HepG2 (cell line): ENCODE measurements at regions of chr2 and their contacts with region 1.

Region 1: GRCh38 chr2:132438691-132439090 is 22.1 kb downstream of the GPR39 start:
- DNase-seq: no peak
- ATAC-seq: no peak
- H3K4me3 ChIP-seq: peak overlapping the region in 1 of 3 experiments; percentile 4; a peak in 1 of 6 replicates
- H3K27ac ChIP-seq: no peak overlapping the region
- H3K4me1 ChIP-seq: peaks cover 44% of the 10 kb centered on the region
- H3K27me3 ChIP-seq: no peaks in the 10 kb centered on the region
- CTCF ChIP-seq: no peak
- EP300 ChIP-seq: no peak
- POLR2A ChIP-seq: no peak
- RAD21 ChIP-seq: no peak

Region 2: GRCh38 chr2:132372276-132372675 is 66.4 kb before region 1 on chr2:
- CTCF ChIA-PET with region 1: no interaction called
- POLR2A ChIA-PET with region 1: no interaction called
- in situ Hi-C with region 1: no loop called
- intact Hi-C with region 1: no loop called
- DNase-seq: no peak
- ATAC-seq: no peak
- H3K4me3 ChIP-seq: no peak overlapping the region
- H3K27ac ChIP-seq: no peak overlapping the region
- H3K4me1 ChIP-seq: no peaks in the 10 kb centered on the region
- H3K27me3 ChIP-seq: no peaks in the 10 kb centered on the region
- CTCF ChIP-seq: no peak
- EP300 ChIP-seq: no peak
- POLR2A ChIP-seq: no peak
- RAD21 ChIP-seq: no peak

Region 3: DNA sequence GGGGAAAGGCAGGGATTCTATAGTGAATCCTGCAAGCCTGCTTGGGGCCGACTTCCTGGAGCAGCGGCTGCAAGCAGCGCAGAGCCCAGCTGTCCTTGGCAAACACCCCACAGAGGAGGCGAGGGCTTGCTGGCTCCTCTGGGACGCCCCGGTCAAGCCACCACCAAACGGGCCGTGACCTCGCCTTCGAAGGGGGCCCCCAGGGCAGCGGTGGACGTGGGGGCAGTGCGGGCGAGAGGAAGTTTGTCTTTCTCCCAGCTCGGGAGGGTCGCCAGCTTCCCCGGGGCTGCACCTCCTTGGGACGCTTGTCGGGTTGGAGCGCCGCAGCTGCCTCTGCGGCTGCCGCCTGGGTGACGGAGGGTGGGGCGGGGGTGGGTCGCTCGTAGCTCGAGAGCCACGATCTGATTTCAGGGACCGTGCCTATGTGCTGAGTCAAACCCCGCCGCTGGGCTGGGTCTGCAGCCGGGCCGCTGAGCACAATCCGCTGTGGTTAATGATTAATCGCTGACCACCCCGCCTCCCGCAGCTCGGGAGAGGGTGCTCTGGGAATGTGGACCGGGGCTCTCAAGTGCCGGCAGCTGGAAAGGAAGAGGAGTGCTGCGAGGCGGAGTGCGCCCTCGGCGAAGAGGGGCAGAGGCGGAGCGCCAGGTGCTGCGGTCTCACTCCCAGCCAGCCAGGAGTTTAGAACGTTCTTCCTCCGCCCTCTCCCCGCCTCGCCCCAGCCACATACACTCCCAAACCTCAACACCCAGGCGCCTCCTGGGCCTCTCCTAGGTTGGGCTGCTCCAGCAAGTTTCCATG is 22.4 kb before region 1 on chr2 and contains the start of gene GPR39:
- CTCF ChIA-PET with region 1: no interaction called
- POLR2A ChIA-PET with region 1: interaction called, 24 read pairs
- in situ Hi-C with region 1: no loop called
- intact Hi-C with region 1: loop called (anchors 2 kb)
- DNase-seq: peak; percentile 92
- ATAC-seq: peak; percentile 98
- H3K4me3 ChIP-seq: peak within 1 kb of the TSS; percentile 60 to 76 (median 61)
- H3K27ac ChIP-seq: no peak within 1 kb of the TSS
- H3K4me1 ChIP-seq: peaks cover 21% of the 10 kb centered on the region
- H3K27me3 ChIP-seq: peaks cover 3 to 20% of the 10 kb centered on the region in 2 experiments; a peak in 3 of 5 replicates
- CTCF ChIP-seq: peak; percentile 58
- EP300 ChIP-seq: peak in 1 of 2 experiments; percentile 9; a peak in 1 of 4 replicates
- POLR2A ChIP-seq: 0 out of 4 replicates have a peak, but pooled peaks of 1 of the 2 experiments have one; percentile 17
- RAD21 ChIP-seq: peak; percentile 34; the same call in 1 of the 2 replicates
- total RNA-seq, gene GPR39: 0.51 and 0.62 TPM in 2 replicates

Region 4: DNA sequence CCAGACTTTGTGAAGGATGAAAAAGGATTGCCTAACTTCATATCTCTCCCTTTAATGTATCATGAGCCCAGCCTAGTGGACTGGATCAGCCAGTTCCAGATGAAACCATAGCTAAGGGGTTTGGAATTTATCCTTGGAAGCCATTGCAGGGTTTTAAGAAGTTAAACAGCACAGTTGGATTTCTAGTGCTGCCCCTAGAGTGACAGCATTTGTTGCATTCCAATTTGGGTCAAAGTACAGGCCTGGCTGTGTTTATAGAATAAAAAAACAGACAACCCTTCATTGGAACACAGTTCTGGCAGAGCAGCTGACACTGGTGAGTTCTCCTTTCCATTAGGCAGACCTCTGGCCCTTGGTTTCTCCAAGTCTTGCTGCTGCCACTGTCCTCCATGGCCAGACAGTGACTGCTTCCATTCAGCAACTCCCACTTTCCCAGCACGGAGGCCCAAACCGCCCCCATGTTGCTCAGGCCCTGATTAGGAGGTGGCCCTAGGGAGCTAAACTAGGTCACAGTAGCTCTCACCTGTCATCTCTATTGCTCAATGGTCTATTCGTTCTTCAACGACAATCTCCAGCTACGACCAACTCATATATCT is 14.1 kb before region 1 on chr2:
- CTCF ChIA-PET with region 1: no interaction called
- POLR2A ChIA-PET with region 1: interaction called, 6 read pairs
- in situ Hi-C with region 1: no loop called
- intact Hi-C with region 1: loop called (anchors 1 kb)
- DNase-seq: peak; percentile 69
- ATAC-seq: peak; percentile 93
- H3K4me3 ChIP-seq: peak overlapping the region in 1 of 3 experiments; percentile 10; a peak in 1 of 6 replicates
- H3K27ac ChIP-seq: no peak overlapping the region
- H3K4me1 ChIP-seq: peaks cover 25% of the 10 kb centered on the region
- H3K27me3 ChIP-seq: no peaks in the 10 kb centered on the region
- CTCF ChIP-seq: peak; percentile 30
- EP300 ChIP-seq: no peak
- POLR2A ChIP-seq: no peak
- RAD21 ChIP-seq: no peak